Brain microvascular endothelial cell (primary cell): ENCODE measurements at regions of chr20 and their contacts with region 1.

Region 1: DNA sequence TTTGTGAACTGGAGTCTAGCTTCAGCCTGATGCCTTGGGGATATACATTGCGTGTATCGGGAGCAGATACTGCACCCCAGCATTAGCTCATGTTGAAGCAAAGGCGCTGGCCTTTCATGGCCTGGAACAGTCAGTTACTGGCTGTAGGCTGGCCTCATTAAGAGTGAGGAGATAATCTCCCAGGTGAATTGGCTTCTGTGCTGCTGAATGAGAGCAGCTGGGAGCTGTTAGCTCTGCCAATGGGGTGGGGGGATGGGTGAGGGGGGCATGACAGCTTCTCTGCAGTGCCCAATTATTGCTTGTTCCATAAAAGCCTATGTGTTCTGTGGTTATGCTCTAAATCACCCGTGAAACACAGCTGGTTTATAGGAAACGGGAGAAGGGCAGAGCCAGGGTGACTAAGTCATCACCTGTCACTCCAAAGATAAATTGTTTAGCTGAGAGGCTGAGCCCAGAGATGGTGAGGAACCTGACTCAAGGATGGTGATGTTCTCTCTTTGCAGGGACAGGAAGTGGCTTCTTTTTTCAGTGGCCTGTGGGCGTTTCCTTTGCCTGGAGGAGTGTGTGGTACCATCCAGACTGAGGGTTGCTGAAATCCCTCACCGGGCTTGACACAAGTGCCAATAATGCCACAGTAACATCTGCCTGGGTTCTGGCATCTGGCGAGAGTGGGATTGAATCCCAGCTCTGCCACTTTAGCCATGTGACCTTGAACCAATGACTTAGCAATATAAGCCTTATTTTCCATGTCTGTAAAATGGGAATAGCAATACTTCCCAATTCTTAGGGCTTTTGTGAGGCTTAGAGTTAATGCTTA is 170.8 kb downstream of the BCAS1 start:
- DNase-seq: no peak
- H3K4me3 ChIP-seq: no peak overlapping the region
- H3K27ac ChIP-seq: peak overlapping the region; percentile 74
- H3K27me3 ChIP-seq: no peaks in the 10 kb centered on the region
- CTCF ChIP-seq: no peak

Region 2: DNA sequence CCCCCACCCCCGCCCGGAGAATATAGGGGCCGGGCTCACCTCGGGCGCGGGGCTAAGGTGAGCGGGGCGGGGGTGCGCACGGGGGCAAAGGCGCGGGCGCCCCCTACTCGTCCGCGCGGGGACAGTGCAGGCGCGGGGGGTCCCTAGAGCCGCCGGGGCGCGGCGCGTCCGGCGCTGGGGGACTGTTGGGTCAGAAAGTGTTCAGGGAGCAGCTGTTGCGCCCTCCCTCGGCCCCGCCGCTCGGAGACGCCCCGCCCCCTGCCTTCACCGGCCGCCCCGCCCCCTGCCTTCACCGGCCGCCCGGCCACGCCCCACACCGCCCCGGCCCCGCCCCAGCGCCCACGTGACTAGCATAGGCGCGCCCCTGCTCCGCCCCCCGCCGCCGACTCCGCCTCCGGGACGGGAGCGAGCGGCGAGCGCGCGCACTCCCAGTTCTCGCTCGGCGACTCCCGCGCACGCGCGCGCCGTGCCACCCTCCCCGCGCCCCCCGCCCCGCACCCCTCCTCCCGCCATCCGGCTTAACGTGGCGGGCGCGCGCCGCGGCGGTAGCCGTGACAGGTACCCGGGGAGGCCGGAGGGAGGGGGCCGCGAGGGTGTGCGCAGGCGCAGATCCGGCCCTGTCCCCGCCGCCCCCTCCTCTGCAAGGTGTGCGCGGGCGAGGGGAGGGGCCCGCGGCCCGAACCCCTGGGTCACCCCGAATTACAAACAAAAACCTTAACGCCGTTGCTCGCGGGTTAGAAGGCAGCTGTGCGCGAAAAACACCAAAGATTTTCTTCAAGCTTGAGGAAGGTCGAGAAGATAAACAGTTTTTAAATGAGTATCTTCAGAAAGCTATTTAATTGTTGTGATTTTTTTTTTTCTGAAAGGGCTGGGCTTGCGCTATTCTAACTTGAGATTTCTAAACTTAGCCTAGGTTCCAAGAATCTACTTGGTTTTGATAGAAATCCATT is 305.2 kb before region 1 on chr20:
- in situ Hi-C with region 1: loop called (anchors 25 kb)
- DNase-seq: peak; percentile 87
- H3K4me3 ChIP-seq: peak overlapping the region; percentile 73
- H3K27ac ChIP-seq: peak overlapping the region; percentile 94
- H3K27me3 ChIP-seq: no peaks in the 10 kb centered on the region
- CTCF ChIP-seq: no peak

Region 3: GRCh38 chr20:53795170-53795569 is 104.4 kb before region 1 on chr20:
- in situ Hi-C with region 1: no loop called
- DNase-seq: peak; percentile 47
- H3K4me3 ChIP-seq: no peak overlapping the region
- H3K27ac ChIP-seq: peak overlapping the region; percentile 43
- H3K27me3 ChIP-seq: no peaks in the 10 kb centered on the region
- CTCF ChIP-seq: no peak